ENCODE measurements at regions of chr16 and their contacts with region 1.

Region 1: DNA sequence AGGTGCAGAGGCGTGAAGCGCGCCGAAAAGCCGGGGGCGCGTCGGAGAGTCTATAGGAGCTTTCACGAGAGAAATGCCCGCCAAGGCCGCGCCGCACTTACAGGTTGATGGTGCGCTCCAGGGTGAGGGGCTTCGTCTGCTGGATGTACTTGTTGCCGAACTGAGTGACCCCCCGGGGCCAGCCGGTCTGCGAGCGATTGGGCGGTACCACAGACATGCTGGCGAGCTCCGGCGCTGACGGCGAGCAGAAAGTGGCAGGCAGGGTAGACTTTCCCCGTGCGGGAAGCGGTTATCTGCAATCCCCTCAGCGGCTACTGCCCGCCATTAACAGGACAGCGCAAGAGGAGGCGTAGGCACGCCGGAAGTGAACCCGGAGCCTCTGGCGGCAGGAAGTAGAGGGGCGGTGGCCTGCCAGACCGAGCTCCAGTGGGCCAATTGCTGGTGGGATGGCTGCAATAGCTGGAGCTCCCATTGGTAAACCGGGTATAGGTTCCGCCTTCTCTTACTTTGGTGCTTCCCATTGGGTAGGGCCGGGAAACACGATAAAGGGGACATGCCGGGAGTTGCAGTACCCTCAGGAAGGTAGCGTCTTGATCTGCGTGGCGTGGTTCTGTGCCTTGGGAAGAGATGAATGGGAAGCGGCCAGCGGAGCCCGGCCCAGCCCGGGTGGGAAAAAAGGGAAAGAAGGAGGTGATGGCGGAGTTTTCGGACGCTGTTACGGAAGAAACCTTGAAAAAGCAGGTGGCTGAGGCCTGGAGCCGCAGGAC is at the starts of genes NUDT21 and OGFOD1:
- DNase-seq: peak; percentile 95
- H3K4me3 Mint-ChIP-seq: peak within 1 kb of the TSS; percentile 95
- H3K27ac Mint-ChIP-seq: peak within 1 kb of the TSS; percentile 89
- H3K4me1 Mint-ChIP-seq: peaks cover 56% of the 10 kb centered on the region
- H3K27me3 Mint-ChIP-seq: no peaks in the 10 kb centered on the region
- total RNA-seq, gene NUDT21: 352 to 361 TPM
- total RNA-seq, gene OGFOD1: 63.0 to 66.4 TPM

Region 2: DNA sequence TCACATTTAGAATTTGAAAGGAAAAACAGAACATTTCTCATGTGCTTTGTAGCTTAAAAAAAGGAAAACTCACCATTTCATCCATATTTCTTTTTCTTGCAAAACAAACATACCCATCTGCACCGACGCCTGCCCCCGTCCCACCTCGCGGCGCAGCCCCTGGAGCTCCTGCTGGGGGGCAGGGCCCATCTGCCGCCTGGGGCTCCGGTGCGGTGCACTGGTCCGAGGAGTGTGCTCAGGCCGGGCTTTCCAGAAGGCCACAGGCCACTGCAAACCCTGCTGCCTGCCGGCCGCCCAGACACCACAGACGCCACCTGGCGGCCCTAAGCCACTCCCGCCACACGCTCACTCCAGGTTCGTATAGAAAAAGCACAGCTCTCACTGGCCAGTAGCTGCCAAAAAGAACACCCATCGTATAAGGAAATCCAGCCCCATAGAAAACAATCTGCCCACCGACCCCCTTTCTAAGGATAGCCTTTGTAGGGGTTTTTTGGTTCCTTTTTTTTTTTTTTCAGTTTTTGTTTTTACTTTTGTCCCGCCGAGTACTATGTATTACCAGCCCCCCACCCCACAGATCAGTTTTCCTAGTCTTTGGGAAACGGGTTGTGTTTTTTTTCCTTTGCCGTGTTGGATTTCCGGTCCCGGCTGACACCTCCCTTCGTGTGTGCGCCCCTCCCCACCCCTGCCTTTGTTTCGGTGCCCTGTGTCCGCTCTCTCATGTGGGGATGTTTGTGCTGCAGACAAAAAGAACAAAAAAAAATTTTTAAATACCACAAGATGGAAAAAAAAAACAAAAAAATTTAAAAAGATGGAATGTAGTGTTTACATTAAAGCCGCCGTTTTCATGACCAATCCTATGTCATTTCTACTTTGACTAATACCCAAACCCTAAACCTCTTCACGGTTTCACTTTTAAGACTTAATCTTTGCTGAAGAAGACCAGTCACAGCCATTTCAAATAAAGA is 94.6 kb before region 1 on chr16:
- CTCF ChIA-PET with region 1: no interaction called
- POLR2A ChIA-PET with region 1: interaction called, 3 read pairs
- intact Hi-C with region 1: loop called (anchors 5 kb)
- DNase-seq: peak; percentile 74
- H3K4me3 Mint-ChIP-seq: peak overlapping the region; percentile 73
- H3K27ac Mint-ChIP-seq: peak overlapping the region; percentile 89
- H3K4me1 Mint-ChIP-seq: peaks cover 23% of the 10 kb centered on the region
- H3K27me3 Mint-ChIP-seq: no peaks in the 10 kb centered on the region

Region 3: DNA sequence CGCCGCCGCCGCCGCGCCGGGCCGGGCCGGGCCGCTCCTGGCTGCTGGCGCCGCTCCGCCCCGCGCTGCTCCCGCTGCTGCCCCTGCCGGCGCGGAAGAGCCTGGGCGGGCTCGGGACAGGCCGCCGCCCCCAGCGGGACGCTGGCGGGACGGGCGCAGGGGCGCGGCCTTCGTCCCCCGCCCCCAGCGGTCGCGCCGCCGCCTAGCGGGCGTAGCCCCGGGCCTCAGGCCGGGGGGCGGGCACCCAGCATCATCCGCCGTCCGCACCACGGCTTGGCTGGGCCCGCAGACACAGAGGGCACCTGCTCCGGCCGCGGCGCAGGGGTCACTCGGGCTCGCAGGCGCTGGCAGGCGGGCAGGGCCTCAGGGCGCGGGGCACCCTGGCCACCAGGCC is 25.7 kb before region 1 on chr16 and contains the start of gene AMFR:
- CTCF ChIA-PET with region 1: interaction called, 10 read pairs
- POLR2A ChIA-PET with region 1: interaction called, 11 read pairs
- intact Hi-C with region 1: loop called (anchors 1 kb)
- DNase-seq: peak; percentile 65
- H3K4me3 Mint-ChIP-seq: peak within 1 kb of the TSS; percentile 89
- H3K27ac Mint-ChIP-seq: peak within 1 kb of the TSS; percentile 46
- H3K4me1 Mint-ChIP-seq: peaks cover 58% of the 10 kb centered on the region
- H3K27me3 Mint-ChIP-seq: no peaks in the 10 kb centered on the region
- total RNA-seq, gene AMFR: 42.0 to 45.4 TPM

Region 4: GRCh38 chr16:56477096-56477878 is 26.1 kb after region 1 on chr16:
- CTCF ChIA-PET with region 1: no interaction called
- POLR2A ChIA-PET with region 1: interaction called, 3 read pairs
- intact Hi-C with region 1: loop called (anchors 2 kb)
- DNase-seq: peak; percentile 35
- H3K4me3 Mint-ChIP-seq: no peak overlapping the region
- H3K27ac Mint-ChIP-seq: peak overlapping the region; percentile 77
- H3K4me1 Mint-ChIP-seq: peaks cover 19% of the 10 kb centered on the region
- H3K27me3 Mint-ChIP-seq: no peaks in the 10 kb centered on the region

Measured in activated CD4-positive, alpha-beta memory T cell treated with anti-CD3 and anti-CD28 coated beads for 36 hours (primary cell).